ENCODE measurements at regions of chr19 and their contacts with region 1.

Region 1: DNA sequence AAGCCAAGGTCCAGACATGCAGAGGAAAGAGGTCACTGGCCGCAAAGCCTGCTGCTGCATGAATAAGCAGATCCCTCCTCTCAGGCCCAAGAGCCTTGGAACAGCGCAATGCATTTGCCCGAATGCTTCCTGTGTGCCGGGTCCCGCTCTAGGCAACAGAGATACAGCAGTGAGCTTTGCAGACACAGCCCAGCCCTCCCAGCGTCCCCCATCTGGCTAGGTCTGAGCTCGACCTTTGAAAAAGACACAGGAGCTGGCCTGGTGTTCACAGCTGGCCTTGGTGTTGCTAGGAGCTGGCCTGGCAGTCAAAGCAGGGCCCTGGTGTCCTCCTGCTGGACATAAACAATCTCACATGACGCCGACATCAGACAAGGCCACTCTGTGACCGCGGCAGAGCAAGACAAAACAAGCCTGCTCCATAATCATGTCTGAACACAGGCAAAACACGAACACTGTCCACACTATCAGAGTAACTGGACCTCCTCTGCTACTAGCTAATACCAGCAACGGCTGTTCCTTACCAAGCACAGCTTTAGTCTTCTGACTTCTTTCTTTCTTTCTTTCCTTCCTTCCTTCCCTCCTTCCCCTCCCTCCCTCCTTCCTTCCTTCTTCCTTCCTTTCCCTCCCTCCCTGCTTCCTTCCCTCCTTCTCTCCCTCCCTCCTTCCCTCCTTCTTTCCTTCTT is 5.7 kb upstream of the PEX11G start:
- DNase-seq: no peak
- H3K4me3 ChIP-seq: no peak overlapping the region
- H3K27ac ChIP-seq: peak overlapping the region; percentile 3 to 79 (median 61)
- H3K4me1 ChIP-seq: peaks cover 1 to 22% (median 14%) of the 10 kb centered on the region in 4 donors
- H3K27me3 ChIP-seq: no peaks in the 10 kb centered on the region
- CTCF ChIP-seq: peak in 1 of 3 experiments; percentile 23
- EP300 ChIP-seq: no peak
- POLR2A ChIP-seq: no peak

Region 2: DNA sequence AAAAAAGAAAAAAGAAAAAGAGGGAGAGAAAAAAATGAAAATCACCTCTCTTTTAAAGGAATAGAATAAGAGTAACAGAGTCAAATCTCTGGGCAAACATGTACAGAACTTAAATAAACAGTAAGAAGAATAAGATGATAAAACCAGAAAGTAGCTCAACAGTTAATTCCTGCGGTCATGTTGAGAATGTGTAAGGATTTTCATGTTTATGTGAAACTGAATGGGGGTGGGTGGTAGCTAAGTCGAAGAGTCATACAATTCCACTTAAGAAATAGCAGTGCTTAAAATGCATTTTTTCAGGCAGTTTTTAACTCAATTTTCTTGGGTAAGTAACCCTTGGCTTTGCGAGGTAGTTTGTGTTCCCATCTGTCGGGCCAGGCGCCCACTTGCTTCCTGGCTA is 66.6 kb before region 1 on chr19:
- intact Hi-C with region 1: no loop called
- DNase-seq: no peak
- H3K4me3 ChIP-seq: no peak overlapping the region
- H3K27ac ChIP-seq: no peak overlapping the region
- H3K4me1 ChIP-seq: no peaks in the 10 kb centered on the region
- H3K27me3 ChIP-seq: no peaks in the 10 kb centered on the region
- CTCF ChIP-seq: no peak
- EP300 ChIP-seq: no peak
- POLR2A ChIP-seq: no peak

Region 3: DNA sequence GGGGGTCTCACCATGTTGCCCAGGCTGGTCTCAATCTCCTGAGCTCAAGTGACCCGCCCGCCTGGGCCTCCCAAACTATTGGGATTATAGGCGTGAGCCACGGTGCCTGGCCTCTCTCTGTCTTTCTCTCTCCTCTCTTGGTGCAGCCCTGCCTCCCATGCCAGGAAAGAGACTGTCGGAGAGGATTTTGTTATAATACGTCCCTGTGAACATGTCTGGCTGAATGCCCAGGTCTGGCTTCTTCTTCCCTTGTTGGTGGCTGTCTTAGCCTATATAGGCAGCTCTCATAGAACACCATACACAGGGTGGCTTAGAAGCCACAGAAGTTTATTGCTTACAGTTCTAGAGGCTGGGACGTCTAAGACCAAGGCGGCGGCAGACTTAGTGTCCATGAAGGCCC is 52.1 kb before region 1 on chr19:
- intact Hi-C with region 1: no loop called
- DNase-seq: no peak
- H3K4me3 ChIP-seq: no peak overlapping the region
- H3K27ac ChIP-seq: no peak overlapping the region
- H3K4me1 ChIP-seq: no peaks in the 10 kb centered on the region
- H3K27me3 ChIP-seq: no peaks in the 10 kb centered on the region
- CTCF ChIP-seq: no peak
- EP300 ChIP-seq: no peak
- POLR2A ChIP-seq: no peak

Region 4: DNA sequence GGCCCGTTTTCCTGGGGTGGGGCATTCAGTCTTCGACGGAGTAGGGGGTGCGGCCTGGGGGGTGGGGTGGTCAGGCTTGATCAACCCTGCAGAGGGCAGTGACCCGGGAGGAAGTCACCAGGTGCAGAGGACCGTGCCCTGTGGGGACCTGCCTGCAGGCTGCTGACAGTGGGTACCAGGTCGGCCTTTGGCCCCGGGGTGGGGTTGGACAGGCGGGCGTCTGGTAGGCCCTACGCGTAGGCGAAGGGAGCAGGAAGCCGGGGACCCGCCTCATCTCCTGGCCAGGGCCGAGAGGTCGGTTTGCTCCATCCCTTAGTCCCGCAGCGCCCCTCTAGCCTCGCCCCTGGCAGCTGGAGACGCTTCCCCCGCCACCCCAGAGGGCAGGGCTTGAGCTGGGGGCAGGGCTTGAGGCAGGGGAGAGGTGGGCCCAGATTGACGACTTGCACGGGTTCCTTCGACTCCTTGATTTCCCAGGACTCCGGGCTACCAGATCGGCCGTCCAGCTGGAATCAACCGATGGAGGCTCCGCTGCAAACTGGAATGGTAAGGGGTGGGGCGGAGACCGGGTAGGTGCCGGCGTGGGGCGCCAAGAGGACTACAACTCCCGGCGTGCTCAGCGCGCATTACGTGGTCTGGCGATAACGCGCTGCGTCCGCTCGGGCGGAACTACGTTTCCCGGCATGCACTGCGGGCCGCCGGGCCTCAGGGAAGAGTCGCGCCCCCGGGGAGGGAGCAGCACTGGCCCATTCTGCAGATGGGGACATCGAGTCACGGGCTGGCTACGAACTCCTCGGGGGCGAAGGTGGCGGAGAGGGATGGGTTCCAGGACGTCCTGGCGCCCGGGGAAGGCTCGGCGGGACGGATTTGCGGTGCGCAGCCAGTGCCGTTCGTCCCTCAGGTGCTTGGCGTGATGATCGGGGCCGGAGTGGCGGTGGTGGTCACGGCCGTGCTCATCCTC is 40.8 kb after region 1 on chr19 and contains the start of gene PNPLA6:
- intact Hi-C with region 1: loop called (anchors 5 kb)
- DNase-seq: peak; percentile 99
- H3K4me3 ChIP-seq: peak within 1 kb of the TSS; percentile 78 to 91 (median 88)
- H3K27ac ChIP-seq: peak within 1 kb of the TSS; percentile 90 to 97 (median 94)
- H3K4me1 ChIP-seq: peaks cover 13 to 28% (median 25%) of the 10 kb centered on the region in 4 donors
- H3K27me3 ChIP-seq: no peaks in the 10 kb centered on the region
- CTCF ChIP-seq: peak in 1 of 3 experiments; percentile 21
- EP300 ChIP-seq: no peak
- POLR2A ChIP-seq: peak; percentile 58
- total RNA-seq, gene PNPLA6: 58.1 to 156 (median 85.7) TPM